Cardiac septum (tissue), 1 donor: ENCODE measurements at regions of chr3 and their contacts with region 1.

Region 1: DNA sequence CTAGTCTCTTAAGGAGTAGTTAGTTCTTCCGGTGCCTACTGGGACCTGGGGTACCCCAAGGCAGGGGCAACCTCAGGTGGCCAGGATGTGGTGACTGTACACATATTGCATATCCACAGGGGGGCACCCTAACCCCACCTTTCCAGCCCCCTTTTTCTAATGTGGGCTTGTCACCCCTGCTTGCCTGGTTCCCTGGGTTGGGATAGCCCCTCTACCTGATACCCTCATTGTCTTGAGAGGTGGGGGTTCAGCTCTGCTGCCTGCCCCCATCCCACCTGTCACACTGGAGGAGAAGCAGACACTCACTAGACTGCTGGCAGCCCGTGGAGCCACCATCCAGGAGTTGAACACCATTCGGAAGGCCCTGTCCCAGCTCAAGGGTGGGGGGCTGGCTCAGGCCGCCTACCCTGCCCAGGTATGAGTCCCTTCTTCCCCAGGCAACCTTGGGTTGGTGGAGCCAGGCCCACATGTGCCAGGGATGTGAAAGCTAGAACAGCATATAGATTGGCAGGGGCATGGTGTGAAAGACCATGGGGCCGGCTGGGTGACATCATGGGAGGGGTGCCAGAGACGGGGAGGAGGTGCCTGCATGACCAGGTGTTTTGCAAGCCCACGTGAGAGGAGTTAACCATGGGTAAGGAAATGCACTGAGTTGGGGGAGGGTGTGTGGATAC is 4.0 kb downstream of the GLYCTK start:
- DNase-seq: no peak

Region 2: GRCh38 chr3:52339612-52340011 is 48.0 kb after region 1 on chr3:
- intact Hi-C with region 1: loop called (anchors 2 kb)
- DNase-seq: no peak

Region 3: GRCh38 chr3:52406231-52406661 is 114.6 kb after region 1 on chr3:
- intact Hi-C with region 1: loop called (anchors 5 kb)
- DNase-seq: peak; percentile 67

Region 4: GRCh38 chr3:52423173-52423572 is 131.5 kb after region 1 on chr3:
- intact Hi-C with region 1: no loop called
- DNase-seq: no peak